Activated T-helper 2 cell treated with anti-CD3 and anti-CD28 coated beads, Interferon-gamma antibody, Interleukin-2, Interleukin-4, amounts not matched to agents 10 μg/mL and 5 μg/mL and 100 μg/mL, durations not matched to agents 14 hours and 24 hours and 36 hours (primary cell): ENCODE measurements at regions of chr12 and their contacts with region 1.

Region 1: DNA sequence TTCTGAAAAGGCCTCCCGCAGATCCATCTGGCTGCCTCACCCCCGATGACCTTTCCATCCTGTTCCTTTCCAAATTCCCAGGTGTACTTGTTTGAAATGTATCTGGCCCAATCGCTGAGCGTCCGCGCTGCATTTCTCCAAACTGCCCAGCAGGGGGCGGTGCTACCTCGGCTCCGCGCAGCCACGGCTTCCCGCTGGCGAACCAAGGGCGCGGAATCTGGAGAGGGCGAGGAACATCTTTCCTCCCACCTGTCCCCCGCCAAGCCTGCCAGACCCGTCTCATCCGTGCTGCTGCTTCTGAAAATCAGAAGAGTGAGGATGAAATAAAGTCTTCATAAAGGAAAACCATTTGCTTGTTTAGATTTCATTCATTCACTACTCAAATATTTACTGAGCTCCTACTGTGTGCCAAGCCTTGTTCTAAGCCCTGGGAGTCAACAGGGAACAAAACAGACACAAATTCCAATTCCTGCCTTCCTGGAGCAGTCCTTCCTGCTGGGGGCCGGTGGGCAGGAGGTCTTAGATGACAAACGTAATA is 16.8 kb upstream of the MYL2 start:
- DNase-seq: peak; percentile 28
- H3K4me3 Mint-ChIP-seq: no peak overlapping the region
- H3K27ac Mint-ChIP-seq: no peak overlapping the region
- H3K4me1 Mint-ChIP-seq: peaks cover 2% of the 10 kb centered on the region
- H3K27me3 Mint-ChIP-seq: peaks cover 10% of the 10 kb centered on the region

Region 2: GRCh38 chr12:110972866-110973265 is 35.7 kb after region 1 on chr12:
- intact Hi-C with region 1: no loop called
- DNase-seq: no peak
- H3K4me3 Mint-ChIP-seq: no peak overlapping the region
- H3K27ac Mint-ChIP-seq: no peak overlapping the region
- H3K4me1 Mint-ChIP-seq: no peaks in the 10 kb centered on the region
- H3K27me3 Mint-ChIP-seq: no peaks in the 10 kb centered on the region

Region 3: GRCh38 chr12:111298582-111299436 is 361.6 kb after region 1 on chr12:
- intact Hi-C with region 1: loop called (anchors 5 kb)
- DNase-seq: peak; percentile 12
- H3K4me3 Mint-ChIP-seq: no peak overlapping the region
- H3K27ac Mint-ChIP-seq: no peak overlapping the region
- H3K4me1 Mint-ChIP-seq: no peaks in the 10 kb centered on the region
- H3K27me3 Mint-ChIP-seq: no peaks in the 10 kb centered on the region

Region 4: DNA sequence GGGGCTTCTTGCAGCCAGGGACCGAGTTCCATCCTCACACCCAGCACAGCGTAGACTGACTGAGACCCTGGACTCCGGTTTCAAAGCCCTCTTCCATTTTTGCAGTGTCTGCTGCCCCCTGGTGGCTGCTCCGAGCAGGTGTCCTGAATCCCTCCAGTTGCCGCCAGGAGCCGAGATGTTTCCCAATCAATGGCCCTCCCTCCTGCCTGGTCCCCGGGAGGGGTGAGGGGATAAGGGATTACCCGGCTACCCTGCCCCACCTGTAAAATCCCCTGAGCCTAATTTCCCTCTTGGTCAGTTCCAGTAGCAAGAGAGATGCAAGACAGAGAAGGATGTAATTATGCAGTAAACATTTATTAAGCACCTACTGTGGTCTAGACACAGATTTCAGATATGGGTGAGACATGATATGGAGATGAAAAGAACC is 376.7 kb after region 1 on chr12:
- intact Hi-C with region 1: loop called (anchors 5 kb)
- DNase-seq: peak; percentile 43
- H3K4me3 Mint-ChIP-seq: no peak overlapping the region
- H3K27ac Mint-ChIP-seq: no peak overlapping the region
- H3K4me1 Mint-ChIP-seq: peaks cover 3% of the 10 kb centered on the region
- H3K27me3 Mint-ChIP-seq: peaks cover 2% of the 10 kb centered on the region